Caco-2 (cell line): ENCODE measurements at regions of chr6 and their contacts with region 1.

Region 1: DNA sequence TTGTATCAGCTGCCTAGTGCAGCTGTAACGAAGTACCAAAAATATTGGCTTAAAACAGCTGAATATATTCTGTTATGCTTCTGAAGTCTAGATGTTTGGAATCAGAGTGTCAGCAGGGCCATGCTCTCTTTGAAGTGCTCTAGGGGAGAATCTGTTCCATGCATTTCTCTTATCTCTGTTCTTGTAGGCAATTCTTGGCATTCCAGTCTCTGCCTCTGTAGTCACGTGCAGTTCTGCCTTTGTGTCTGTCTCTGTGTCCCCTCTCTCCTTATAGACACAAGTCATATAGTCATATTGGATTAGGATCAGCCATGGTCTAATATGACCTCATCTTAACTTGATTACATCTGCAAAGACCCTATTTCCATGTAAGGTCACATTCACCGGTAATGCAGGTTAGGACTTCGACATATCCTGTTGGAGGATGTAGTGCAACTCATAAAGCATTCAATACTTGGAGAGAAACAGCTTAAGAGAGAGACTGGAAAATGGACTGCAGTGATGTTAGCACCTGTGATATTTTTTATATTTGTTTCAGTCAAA is 18.6 kb downstream of the FAM83B start:
- DNase-seq: peak; percentile 69 to 79
- H3K4me3 ChIP-seq: no peak overlapping the region
- H3K4me3 Mint-ChIP-seq: peak overlapping the region; percentile 54
- H3K27ac Mint-ChIP-seq: peak overlapping the region; percentile 80
- H3K4me1 ChIP-seq: peaks cover 84% of the 10 kb centered on the region
- H3K4me1 Mint-ChIP-seq: peaks cover 32% of the 10 kb centered on the region
- H3K27me3 ChIP-seq: no peaks in the 10 kb centered on the region
- H3K27me3 Mint-ChIP-seq: no peaks in the 10 kb centered on the region
- CTCF ChIP-seq: no peak

Region 2: DNA sequence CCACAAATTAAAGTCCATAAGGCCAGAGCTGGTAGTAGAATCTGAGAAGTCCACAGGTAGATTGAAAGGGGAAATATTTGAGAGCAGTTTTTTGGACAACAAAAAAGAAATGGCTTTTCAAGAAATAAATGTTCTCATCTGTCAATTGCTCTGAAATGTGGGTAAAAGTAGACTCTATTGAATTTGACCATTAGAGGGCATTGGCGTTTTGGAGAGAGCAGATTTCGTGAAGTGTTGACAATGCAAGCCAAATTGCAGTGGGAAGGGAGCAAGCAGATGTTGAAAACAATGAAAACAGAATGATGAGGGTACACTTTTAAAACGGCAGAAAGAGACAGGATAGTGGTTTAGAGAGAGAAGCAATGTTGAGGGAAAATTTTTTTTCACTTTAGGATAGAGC is 167.7 kb before region 1 on chr6:
- CTCF ChIA-PET with region 1: no interaction called
- POLR2A ChIA-PET with region 1: no interaction called
- intact Hi-C with region 1: loop called (anchors 5 kb)
- DNase-seq: peak in 1 of 2 experiments; percentile 10
- H3K4me3 ChIP-seq: no peak overlapping the region
- H3K4me3 Mint-ChIP-seq: peak overlapping the region; percentile 10
- H3K27ac Mint-ChIP-seq: peak overlapping the region; percentile 13
- H3K4me1 ChIP-seq: peaks cover 14% of the 10 kb centered on the region
- H3K4me1 Mint-ChIP-seq: peaks cover 8% of the 10 kb centered on the region
- H3K27me3 ChIP-seq: no peaks in the 10 kb centered on the region
- H3K27me3 Mint-ChIP-seq: no peaks in the 10 kb centered on the region
- CTCF ChIP-seq: peak; percentile 31 to 34

Region 3: GRCh38 chr6:54846243-54846856 is 18.8 kb before region 1 on chr6 and contains the start of gene FAM83B:
- CTCF ChIA-PET with region 1: no interaction called
- POLR2A ChIA-PET with region 1: interaction called, 3 read pairs
- intact Hi-C with region 1: loop called (anchors 2 kb)
- DNase-seq: peak; percentile 84 to 87
- H3K4me3 ChIP-seq: peak within 1 kb of the TSS; percentile 43
- H3K4me3 Mint-ChIP-seq: peak within 1 kb of the TSS; percentile 98
- H3K27ac Mint-ChIP-seq: peak within 1 kb of the TSS; percentile 93
- H3K4me1 ChIP-seq: peaks cover 22% of the 10 kb centered on the region
- H3K4me1 Mint-ChIP-seq: peaks cover 33% of the 10 kb centered on the region
- H3K27me3 ChIP-seq: no peaks in the 10 kb centered on the region
- H3K27me3 Mint-ChIP-seq: no peaks in the 10 kb centered on the region
- CTCF ChIP-seq: no peak
- total RNA-seq, gene FAM83B: 16.9 and 21.1 TPM in 2 replicates

Region 4: DNA sequence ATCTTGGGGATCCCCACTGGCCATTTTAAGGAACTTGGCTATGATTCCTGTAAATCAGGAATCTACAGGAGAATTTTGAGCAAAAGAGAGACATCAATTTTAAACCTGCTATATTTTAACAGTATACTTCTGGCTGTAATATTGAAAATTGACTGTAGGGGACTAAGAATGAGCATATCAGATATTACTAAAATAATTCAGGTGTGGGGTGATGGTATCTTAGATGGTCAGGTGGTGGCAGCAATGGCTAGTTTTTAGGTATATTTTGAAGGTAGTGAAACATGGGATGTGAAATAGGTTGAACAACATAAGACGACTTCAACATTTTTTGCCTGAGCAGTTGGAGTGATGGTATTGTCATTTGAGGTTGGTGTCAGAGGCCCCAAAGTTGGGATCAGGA is 13.5 kb after region 1 on chr6:
- CTCF ChIA-PET with region 1: no interaction called
- POLR2A ChIA-PET with region 1: no interaction called
- intact Hi-C with region 1: loop called (anchors 1 kb)
- DNase-seq: no peak
- H3K4me3 ChIP-seq: no peak overlapping the region
- H3K4me3 Mint-ChIP-seq: no peak overlapping the region
- H3K27ac Mint-ChIP-seq: no peak overlapping the region
- H3K4me1 ChIP-seq: peaks cover 51% of the 10 kb centered on the region
- H3K4me1 Mint-ChIP-seq: peaks cover 8% of the 10 kb centered on the region
- H3K27me3 ChIP-seq: no peaks in the 10 kb centered on the region
- H3K27me3 Mint-ChIP-seq: no peaks in the 10 kb centered on the region
- CTCF ChIP-seq: peak in 1 of 2 experiments; percentile 23